ENCODE measurements at regions of chr13 and their contacts with region 1.

Region 1: GRCh38 chr13:40982772-40983171 is 36.3 kb downstream of the ELF1 start:
- DNase-seq: peak; percentile 85
- H3K4me3 ChIP-seq: peak overlapping the region; percentile 85
- H3K27ac ChIP-seq: peak overlapping the region; percentile 89
- H3K4me1 ChIP-seq: peaks cover 51% of the 10 kb centered on the region
- CTCF ChIP-seq: no peak

Region 2: GRCh38 chr13:40969169-40969901 is 13.4 kb before region 1 on chr13:
- CTCF ChIA-PET with region 1: interaction called, 3 read pairs
- POLR2A ChIA-PET with region 1: interaction called, 10 read pairs
- intact Hi-C with region 1: loop called (anchors 1 kb)
- DNase-seq: peak; percentile 50
- H3K4me3 ChIP-seq: peak overlapping the region; percentile 85
- H3K27ac ChIP-seq: peak overlapping the region; percentile 32
- H3K4me1 ChIP-seq: peaks cover 100% of the 10 kb centered on the region
- CTCF ChIP-seq: no peak

Region 3: DNA sequence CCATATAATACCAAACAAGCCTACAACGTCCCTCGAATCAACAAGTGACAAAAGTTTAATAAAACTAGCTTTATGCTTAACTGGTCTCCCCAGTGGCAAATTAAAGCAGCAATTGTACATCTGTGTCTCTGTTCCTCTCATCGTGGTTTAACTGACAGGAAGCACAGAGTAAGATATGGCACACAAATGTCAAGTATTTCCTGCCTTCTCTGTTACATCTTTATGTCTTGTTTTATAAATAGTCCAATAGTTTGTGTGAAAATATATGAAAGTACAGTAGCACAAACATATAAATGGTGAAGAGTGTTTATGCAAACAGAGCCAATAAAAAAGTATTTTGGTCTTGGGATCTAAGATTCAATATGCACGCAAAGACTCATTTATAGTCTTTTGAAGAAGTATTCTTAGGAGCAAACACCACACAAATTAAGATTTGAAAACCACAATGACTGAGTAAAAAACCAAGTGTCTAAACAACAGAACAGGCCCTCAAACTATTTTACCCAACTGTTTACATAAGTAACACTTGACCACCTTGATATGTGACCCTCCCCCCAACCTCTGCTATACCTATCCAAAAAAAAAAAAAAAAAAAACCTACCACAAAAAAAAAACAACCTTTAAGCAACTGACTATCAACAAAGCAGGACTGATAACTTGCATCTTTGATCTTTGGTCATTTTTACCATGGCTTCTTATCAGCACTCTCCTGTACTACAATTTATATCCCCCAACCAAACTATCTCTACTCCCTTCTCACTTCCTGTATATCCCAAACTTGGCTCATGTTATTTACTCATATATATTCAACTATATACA is 22.3 kb after region 1 on chr13:
- CTCF ChIA-PET with region 1: no interaction called
- POLR2A ChIA-PET with region 1: interaction called, 139 read pairs
- intact Hi-C with region 1: loop called (anchors 2 kb)
- DNase-seq: peak; percentile 89
- H3K4me3 ChIP-seq: peak overlapping the region; percentile 64
- H3K27ac ChIP-seq: peak overlapping the region; percentile 99
- H3K4me1 ChIP-seq: peaks cover 95% of the 10 kb centered on the region
- CTCF ChIP-seq: no peak

Region 4: DNA sequence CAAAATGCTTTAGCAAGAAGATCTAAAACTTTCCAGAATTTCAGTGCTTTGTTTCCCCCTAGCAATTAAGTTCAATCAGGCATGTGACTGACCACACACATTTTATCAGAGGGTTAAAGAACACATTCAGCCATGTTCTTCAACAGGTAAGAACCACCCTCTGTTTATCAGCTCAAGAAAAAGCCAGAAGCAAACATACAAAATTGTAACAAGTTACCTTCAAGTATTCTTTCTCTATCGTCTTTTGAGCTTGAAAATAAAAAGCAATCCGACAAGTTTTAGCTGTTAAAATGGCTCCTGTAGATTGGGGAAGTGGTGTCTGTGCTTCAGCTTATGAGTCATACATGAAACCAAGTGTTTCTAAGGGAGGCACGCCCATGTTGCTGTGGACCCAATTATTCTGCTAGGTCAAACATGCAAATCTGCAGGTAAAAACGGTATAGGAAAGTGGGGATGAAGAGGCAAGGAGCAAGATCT is 36.3 kb after region 1 on chr13 and contains the start of gene ELF1:
- CTCF ChIA-PET with region 1: interaction called, 3 read pairs
- POLR2A ChIA-PET with region 1: interaction called, 139 read pairs
- intact Hi-C with region 1: loop called (anchors 1 kb)
- DNase-seq: peak; percentile 95
- H3K4me3 ChIP-seq: peak within 1 kb of the TSS; percentile 84
- H3K27ac ChIP-seq: peak within 1 kb of the TSS; percentile 94
- H3K4me1 ChIP-seq: peaks cover 49% of the 10 kb centered on the region
- CTCF ChIP-seq: no peak
- total RNA-seq, gene ELF1: 106 and 111 TPM in 2 replicates